Kidney (tissue), 22 donors: ENCODE measurements at regions of chr13 and their contacts with region 1.

Region 1: GRCh38 chr13:47484548-47484947 is 516.5 kb downstream of the SUCLA2 start:
- DNase-seq: no peak
- H3K4me3 ChIP-seq: no peak overlapping the region
- H3K27ac ChIP-seq: no peak overlapping the region
- H3K4me1 ChIP-seq: no peaks in the 10 kb centered on the region
- H3K27me3 ChIP-seq: no peaks in the 10 kb centered on the region
- CTCF ChIP-seq: no peak

Region 2: DNA sequence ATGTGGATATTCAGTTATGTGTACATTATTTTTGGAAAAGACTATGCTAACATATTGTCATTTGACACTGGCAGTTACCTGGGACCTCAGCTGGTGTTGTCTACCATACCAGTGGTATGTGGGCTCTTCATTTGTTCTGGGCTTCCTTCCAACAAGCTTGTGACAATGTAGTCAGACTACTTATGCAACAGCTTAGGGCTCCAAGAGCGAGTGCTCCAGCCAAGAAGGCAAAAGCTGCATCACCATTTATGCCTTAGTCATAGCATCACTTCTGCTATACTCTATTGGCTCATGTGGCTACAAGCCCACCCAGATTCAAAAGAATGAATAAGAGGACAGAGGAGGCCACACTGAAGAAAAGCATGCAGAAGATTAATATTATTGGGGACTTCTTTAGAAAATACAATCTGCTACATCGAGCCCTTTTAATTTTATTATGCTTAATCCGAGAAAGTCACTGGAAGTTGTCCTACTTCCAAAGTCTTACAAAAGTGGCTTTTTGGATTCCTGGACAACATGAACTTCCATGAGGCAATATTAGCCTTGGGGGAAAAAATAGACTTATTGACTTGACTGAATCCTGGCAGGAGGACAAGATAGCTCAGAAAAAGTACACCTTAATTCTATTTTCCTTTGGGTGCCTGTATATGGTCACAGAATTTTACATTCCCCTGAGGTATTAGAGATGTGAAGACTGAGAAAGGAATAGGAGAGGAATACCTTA is 58.3 kb before region 1 on chr13:
- intact Hi-C with region 1: no loop called
- DNase-seq: no peak
- H3K4me3 ChIP-seq: no peak overlapping the region
- H3K27ac ChIP-seq: no peak overlapping the region
- H3K4me1 ChIP-seq: no peaks in the 10 kb centered on the region
- H3K27me3 ChIP-seq: no peaks in the 10 kb centered on the region
- CTCF ChIP-seq: no peak

Region 3: GRCh38 chr13:47598340-47598911 is 113.9 kb after region 1 on chr13:
- intact Hi-C with region 1: loop called (anchors 5 kb)
- DNase-seq: peak in 2 of 5 donors; percentile 7 to 8
- H3K4me3 ChIP-seq: no peak overlapping the region
- H3K27ac ChIP-seq: no peak overlapping the region
- H3K4me1 ChIP-seq: no peaks in the 10 kb centered on the region
- H3K27me3 ChIP-seq: no peaks in the 10 kb centered on the region
- CTCF ChIP-seq: peak; percentile 9